Colonic mucosa (tissue), 4 donors: ENCODE measurements at regions of chr5 and their contacts with region 1.

Region 1: GRCh38 chr5:93607367-93608258 is 24.6 kb downstream of the NR2F1 start:
- DNase-seq: no peak
- H3K4me3 ChIP-seq: no peak overlapping the region
- H3K27ac ChIP-seq: no peak overlapping the region
- H3K4me1 ChIP-seq: no peaks in the 10 kb centered on the region
- H3K27me3 ChIP-seq: peaks cover 88% of the 10 kb centered on the region
- CTCF ChIP-seq: peak; percentile 19

Region 2: GRCh38 chr5:93800988-93801811 is 193.6 kb after region 1 on chr5:
- intact Hi-C with region 1: loop called (anchors 10 kb)
- DNase-seq: peak; percentile 39
- H3K4me3 ChIP-seq: no peak overlapping the region
- H3K27ac ChIP-seq: no peak overlapping the region
- H3K4me1 ChIP-seq: no peaks in the 10 kb centered on the region
- H3K27me3 ChIP-seq: no peaks in the 10 kb centered on the region
- CTCF ChIP-seq: peak; percentile 52